Psoas muscle (tissue), 8 donors: ENCODE measurements at regions of chr1 and their contacts with region 1.

Region 1: DNA sequence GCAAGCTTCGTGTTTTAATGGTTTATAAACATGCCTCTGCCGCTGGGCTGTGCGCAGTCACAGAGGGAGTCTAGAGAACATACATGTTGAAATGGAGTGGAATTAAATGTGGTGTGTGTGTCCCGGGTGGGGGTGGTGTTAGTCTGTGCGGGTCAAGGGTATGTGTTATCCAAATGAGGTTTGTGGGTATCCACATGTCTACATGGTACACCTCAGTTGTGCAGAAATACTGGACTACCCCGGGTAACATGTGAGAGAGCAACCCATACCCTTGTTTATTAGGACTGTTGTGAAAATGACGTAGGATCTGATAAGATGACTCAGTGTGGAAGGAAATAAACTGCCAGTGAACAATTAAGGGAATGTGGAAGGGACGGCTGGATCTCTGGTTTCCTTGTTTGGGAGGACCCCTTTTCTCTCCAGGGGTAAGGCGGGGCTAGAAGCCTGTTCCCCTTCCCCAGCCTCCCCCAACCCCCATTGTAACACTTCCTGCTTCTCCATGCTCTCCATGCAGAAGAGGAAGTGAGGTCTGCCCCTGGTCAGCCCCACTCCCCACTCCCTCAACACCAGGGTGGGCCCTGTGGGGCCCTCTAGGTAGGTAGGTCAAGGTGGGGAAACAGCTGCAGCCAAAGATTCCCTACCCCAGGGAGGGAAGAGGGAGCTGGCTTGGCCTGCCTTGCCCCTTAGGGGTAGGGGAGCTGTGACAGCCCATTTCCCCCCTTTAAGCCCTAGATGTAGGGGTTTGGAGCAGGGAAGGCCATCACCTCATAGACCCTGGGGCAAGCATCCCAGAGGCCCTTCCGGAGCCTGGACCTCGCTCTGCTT is 690 bp downstream of the EPS8L3 start:
- DNase-seq: peak in 1 of 2 donors; percentile 12
- ATAC-seq: no peak
- H3K4me3 ChIP-seq: no peak overlapping the region
- H3K27ac ChIP-seq: no peak overlapping the region
- H3K4me1 ChIP-seq: no peaks in the 10 kb centered on the region
- H3K27me3 ChIP-seq: no peaks in the 10 kb centered on the region
- CTCF ChIP-seq: no peak

Region 2: GRCh38 chr1:109704173-109704572 is 58.9 kb before region 1 on chr1:
- intact Hi-C with region 1: loop called in 1 of 2 experiments (anchors 10 kb)
- DNase-seq: no peak
- ATAC-seq: peak in 1 of 4 donors; percentile 58
- H3K4me3 ChIP-seq: no peak overlapping the region
- H3K27ac ChIP-seq: no peak overlapping the region
- H3K4me1 ChIP-seq: no peaks in the 10 kb centered on the region
- H3K27me3 ChIP-seq: no peaks in the 10 kb centered on the region
- CTCF ChIP-seq: no peak

Region 3: DNA sequence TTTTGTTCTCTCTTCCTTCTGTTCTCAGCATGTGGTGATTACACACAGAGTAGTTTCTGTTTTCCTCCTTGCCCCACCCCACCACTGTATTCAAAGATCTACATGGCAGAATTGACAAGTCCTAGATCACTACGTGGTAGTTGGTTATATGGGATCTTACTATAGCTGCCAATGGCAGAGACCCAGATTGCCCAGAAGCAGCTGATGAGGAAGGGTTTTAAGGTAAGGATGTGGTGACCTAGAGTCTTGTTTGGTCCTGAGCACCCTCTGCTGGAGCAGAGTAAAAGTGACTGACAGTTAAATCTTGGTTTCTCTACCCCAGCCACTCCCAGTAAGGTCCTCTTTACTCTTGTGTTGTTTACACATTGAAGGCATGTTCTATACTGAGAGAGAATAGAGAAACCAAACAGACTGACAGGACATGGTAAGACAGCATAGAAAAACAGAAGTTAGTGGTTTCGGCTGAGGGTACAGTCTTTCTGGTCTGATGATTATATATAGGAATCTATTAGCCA is 248.6 kb after region 1 on chr1:
- intact Hi-C with region 1: no loop called
- DNase-seq: no peak
- ATAC-seq: peak; percentile 74 to 86 (median 82)
- H3K4me3 ChIP-seq: no peak overlapping the region
- H3K27ac ChIP-seq: no peak overlapping the region
- H3K4me1 ChIP-seq: peaks cover 31% of the 10 kb centered on the region
- H3K27me3 ChIP-seq: no peaks in the 10 kb centered on the region
- CTCF ChIP-seq: peak; percentile 60

Region 4: DNA sequence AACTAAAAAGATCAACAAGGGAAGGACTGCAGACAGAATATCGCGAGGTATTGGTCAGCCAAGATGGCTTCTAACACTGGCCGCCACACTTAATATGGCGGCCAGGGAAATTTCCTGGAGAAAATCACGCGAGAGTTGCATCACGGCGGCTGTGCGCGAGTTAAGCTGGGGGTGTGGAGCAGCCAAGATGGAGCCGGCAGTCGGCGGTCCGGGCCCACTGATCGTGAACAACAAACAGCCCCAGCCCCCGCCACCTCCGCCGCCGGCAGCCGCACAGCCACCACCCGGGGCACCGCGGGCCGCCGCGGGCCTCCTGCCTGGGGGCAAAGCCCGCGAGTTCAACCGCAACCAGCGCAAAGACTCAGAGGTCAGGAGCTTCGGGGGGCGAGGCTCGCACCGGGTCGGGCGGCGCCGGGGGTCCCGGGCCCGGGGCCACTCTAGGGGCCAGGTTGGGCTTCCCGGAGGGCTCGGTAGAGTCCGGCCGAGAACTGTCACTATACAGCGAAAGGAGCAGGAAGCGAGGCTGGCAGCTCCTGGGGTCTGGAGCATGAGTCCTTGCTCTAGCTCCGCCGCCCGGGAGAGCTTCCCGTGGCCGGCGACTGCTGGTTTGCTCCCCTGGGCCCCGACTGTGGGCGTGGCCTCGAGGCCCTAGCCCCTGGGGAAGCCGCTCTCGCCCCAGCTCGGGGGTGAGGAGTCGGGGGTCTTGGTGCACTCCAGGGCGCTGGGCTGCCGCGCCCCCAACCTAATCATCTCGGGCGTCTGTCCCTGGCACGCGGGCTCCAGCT is 271.6 kb after region 1 on chr1 and contains the start of gene STRIP1:
- intact Hi-C with region 1: no loop called
- DNase-seq: peak; percentile 92 to 95
- ATAC-seq: peak; percentile 95 to 97 (median 97)
- H3K4me3 ChIP-seq: peak within 1 kb of the TSS; percentile 93
- H3K27ac ChIP-seq: peak within 1 kb of the TSS; percentile 88
- H3K4me1 ChIP-seq: peaks cover 14% of the 10 kb centered on the region
- H3K27me3 ChIP-seq: no peaks in the 10 kb centered on the region
- CTCF ChIP-seq: no peak
- total RNA-seq, gene STRIP1: 16.1 to 23.1 (median 17.0) TPM